ENCODE measurements at regions of chr7 and their contacts with region 1.

Region 1: GRCh38 chr7:95871078-95871782 is 98.9 kb downstream of the DYNC1I1 start:
- DNase-seq: peak; percentile 72
- H3K4me3 ChIP-seq: no peak overlapping the region
- H3K27ac ChIP-seq: no peak overlapping the region
- H3K4me1 ChIP-seq: peaks cover 29% of the 10 kb centered on the region
- H3K27me3 ChIP-seq: no peaks in the 10 kb centered on the region
- CTCF ChIP-seq: peak; percentile 49 to 66
- POLR2A ChIP-seq: no peak

Region 2: GRCh38 chr7:95434557-95435421 is 436.4 kb before region 1 on chr7 and contains the start of gene PON2:
- CTCF ChIA-PET with region 1: no interaction called
- POLR2A ChIA-PET with region 1: no interaction called
- dilution Hi-C with region 1: no loop called
- intact Hi-C with region 1: loop called (anchors 10 kb)
- DNase-seq: peak; percentile 84
- H3K4me3 ChIP-seq: peak within 1 kb of the TSS; percentile 74 to 97 (median 89)
- H3K27ac ChIP-seq: peak within 1 kb of the TSS; percentile 78
- H3K4me1 ChIP-seq: peaks cover 18% of the 10 kb centered on the region
- H3K27me3 ChIP-seq: no peaks in the 10 kb centered on the region
- CTCF ChIP-seq: no peak
- POLR2A ChIP-seq: peak; percentile 98
- total RNA-seq, gene PON2: 125 and 134 TPM in 2 replicates

Region 3: GRCh38 chr7:95596198-95597063 is 274.8 kb before region 1 on chr7 and contains the start of gene PDK4:
- CTCF ChIA-PET with region 1: no interaction called
- POLR2A ChIA-PET with region 1: no interaction called
- dilution Hi-C with region 1: no loop called
- intact Hi-C with region 1: loop called (anchors 5 kb)
- DNase-seq: peak; percentile 93
- H3K4me3 ChIP-seq: peak within 1 kb of the TSS; percentile 14 to 49 (median 36)
- H3K27ac ChIP-seq: no peak within 1 kb of the TSS
- H3K4me1 ChIP-seq: peaks cover 3% of the 10 kb centered on the region
- H3K27me3 ChIP-seq: peaks cover 3% of the 10 kb centered on the region in 2 experiments
- CTCF ChIP-seq: no peak
- POLR2A ChIP-seq: no peak
- total RNA-seq, gene PDK4: 1.2 and 2.5 TPM in 2 replicates

Region 4: GRCh38 chr7:95794917-95795515 is 76.2 kb before region 1 on chr7:
- CTCF ChIA-PET with region 1: interaction called, 100 read pairs
- POLR2A ChIA-PET with region 1: interaction called, 3 read pairs
- dilution Hi-C with region 1: no loop called
- intact Hi-C with region 1: loop called (anchors 1 kb)
- DNase-seq: peak; percentile 18
- H3K4me3 ChIP-seq: no peak overlapping the region
- H3K27ac ChIP-seq: no peak overlapping the region
- H3K4me1 ChIP-seq: peaks cover 12% of the 10 kb centered on the region
- H3K27me3 ChIP-seq: no peaks in the 10 kb centered on the region
- CTCF ChIP-seq: peak; percentile 38 to 46
- POLR2A ChIP-seq: no peak

Region 5: DNA sequence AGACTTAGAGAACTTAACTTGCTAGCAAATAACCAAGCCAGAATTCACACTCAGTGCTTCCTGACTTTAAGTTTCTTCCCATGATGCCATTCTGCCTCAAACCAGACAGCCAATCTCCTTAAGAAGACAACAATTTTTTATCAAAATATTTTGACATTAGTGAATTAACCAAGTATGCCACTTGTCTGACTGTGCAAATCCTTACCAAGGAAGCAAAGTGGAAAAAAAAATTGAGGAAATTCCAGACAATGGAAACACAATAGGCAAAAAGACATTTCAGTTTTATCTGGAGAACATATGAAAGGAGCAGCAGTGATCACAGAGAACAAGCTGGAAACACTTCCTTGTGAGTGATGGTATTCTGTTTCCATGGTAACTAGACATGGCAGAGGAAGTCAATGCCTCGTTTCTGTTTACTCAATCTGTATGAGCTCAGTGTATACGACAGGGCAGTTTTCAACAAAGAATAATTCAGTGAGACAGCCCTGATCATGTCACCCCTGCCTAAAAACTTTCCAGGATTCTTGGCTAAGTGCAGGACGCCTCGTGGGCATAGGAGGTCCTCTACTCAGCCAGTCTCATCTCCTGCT is 15.4 kb after region 1 on chr7:
- CTCF ChIA-PET with region 1: interaction called, 26 read pairs
- POLR2A ChIA-PET with region 1: no interaction called
- dilution Hi-C with region 1: no loop called
- intact Hi-C with region 1: loop called (anchors 1 kb)
- DNase-seq: peak; percentile 96
- H3K4me3 ChIP-seq: peak overlapping the region in 1 of 3 experiments; percentile 7
- H3K27ac ChIP-seq: peak overlapping the region; percentile 73
- H3K4me1 ChIP-seq: peaks cover 17% of the 10 kb centered on the region
- H3K27me3 ChIP-seq: no peaks in the 10 kb centered on the region
- CTCF ChIP-seq: no peak
- POLR2A ChIP-seq: no peak

Region 6: DNA sequence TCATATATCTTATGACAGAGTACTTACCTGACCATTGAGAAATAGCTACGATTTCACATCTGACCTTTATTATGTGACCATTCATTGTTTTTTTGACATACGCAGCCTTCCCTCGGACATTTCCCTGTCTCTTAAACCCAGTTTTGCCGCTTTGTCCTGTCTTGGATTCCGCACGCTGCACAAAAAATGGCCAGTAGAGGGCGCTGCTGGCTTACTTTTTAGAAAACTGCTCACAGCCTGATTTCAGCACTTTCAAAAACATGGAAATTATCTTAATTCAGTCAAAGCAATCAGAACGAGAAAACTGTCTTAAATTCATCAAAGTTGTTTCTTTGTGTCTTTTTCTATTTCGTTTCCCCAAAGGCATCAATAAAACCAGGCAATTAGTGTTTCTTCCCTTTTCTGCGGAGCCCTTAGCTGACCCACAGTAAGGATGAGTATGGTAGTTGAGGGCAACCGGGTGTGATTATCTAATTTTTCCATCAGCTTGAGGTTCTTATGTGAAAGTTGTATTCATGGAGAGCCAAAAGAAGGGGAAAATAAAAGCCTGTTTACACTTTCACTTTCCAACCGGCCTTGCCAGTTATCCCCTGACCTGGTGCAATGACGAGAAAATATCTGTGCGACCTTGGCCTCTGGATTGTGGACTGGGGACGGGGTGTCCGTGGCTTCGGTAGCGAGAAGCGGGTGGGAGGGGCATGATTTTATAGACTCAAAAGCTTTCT is 45.5 kb after region 1 on chr7:
- CTCF ChIA-PET with region 1: interaction called, 7 read pairs
- POLR2A ChIA-PET with region 1: no interaction called
- dilution Hi-C with region 1: no loop called
- intact Hi-C with region 1: loop called (anchors 1 kb)
- DNase-seq: peak; percentile 77
- H3K4me3 ChIP-seq: no peak overlapping the region
- H3K27ac ChIP-seq: no peak overlapping the region
- H3K4me1 ChIP-seq: no peaks in the 10 kb centered on the region
- H3K27me3 ChIP-seq: peaks cover 20 to 21% of the 10 kb centered on the region in 2 experiments
- CTCF ChIP-seq: peak; percentile 72 to 94
- POLR2A ChIP-seq: no peak